GM10248 (cell line): ENCODE measurements at regions of chr1 and their contacts with region 1.

Region 1: GRCh38 chr1:152189657-152190442 is 30.8 kb upstream of the RPTN start:
- DNase-seq: peak; percentile 65
- CTCF ChIP-seq: peak; percentile 71

Region 2: GRCh38 chr1:151961833-151962232 is 228.0 kb before region 1 on chr1:
- CTCF ChIA-PET with region 1: no interaction called
- POLR2A ChIA-PET with region 1: no interaction called
- DNase-seq: no peak
- CTCF ChIP-seq: no peak

Region 3: GRCh38 chr1:152047730-152048402 is 142.0 kb before region 1 on chr1:
- CTCF ChIA-PET with region 1: interaction called, 220 read pairs
- POLR2A ChIA-PET with region 1: no interaction called
- DNase-seq: peak; percentile 87
- CTCF ChIP-seq: peak; percentile 65

Region 4: DNA sequence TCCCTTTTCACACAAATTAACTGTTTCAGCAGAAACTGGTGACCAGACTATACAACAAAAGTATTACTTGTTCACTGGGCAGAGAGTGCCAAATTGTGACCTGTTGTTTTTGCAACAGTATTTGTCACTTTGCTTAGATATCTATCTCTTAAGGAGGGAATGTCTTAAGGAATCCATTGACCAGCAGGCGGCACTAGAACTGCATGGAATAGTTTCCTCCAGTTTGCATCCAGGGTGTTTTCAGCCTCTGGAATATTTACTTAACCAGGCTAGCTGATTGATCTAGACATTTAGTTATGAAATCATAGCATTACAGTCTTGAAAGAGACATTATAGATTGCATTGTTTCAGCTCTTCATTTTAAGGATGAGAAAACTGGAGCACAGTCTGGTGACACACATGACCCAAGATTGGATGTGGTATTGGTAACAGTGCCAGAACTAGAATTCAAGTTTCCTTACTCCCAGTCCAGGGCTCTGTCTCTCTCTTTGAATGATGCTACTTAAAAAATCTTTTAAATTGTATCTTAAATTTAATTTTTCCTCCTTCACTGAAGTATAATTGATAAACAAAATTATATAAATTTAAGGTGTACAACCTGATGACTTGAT is 47.8 kb before region 1 on chr1:
- CTCF ChIA-PET with region 1: interaction called, 21 read pairs
- POLR2A ChIA-PET with region 1: no interaction called
- DNase-seq: peak; percentile 13
- CTCF ChIP-seq: peak; percentile 42

Region 5: GRCh38 chr1:152162806-152163463 is 26.9 kb before region 1 on chr1:
- CTCF ChIA-PET with region 1: interaction called, 11 read pairs
- POLR2A ChIA-PET with region 1: no interaction called
- DNase-seq: no peak
- CTCF ChIP-seq: no peak

Region 6: DNA sequence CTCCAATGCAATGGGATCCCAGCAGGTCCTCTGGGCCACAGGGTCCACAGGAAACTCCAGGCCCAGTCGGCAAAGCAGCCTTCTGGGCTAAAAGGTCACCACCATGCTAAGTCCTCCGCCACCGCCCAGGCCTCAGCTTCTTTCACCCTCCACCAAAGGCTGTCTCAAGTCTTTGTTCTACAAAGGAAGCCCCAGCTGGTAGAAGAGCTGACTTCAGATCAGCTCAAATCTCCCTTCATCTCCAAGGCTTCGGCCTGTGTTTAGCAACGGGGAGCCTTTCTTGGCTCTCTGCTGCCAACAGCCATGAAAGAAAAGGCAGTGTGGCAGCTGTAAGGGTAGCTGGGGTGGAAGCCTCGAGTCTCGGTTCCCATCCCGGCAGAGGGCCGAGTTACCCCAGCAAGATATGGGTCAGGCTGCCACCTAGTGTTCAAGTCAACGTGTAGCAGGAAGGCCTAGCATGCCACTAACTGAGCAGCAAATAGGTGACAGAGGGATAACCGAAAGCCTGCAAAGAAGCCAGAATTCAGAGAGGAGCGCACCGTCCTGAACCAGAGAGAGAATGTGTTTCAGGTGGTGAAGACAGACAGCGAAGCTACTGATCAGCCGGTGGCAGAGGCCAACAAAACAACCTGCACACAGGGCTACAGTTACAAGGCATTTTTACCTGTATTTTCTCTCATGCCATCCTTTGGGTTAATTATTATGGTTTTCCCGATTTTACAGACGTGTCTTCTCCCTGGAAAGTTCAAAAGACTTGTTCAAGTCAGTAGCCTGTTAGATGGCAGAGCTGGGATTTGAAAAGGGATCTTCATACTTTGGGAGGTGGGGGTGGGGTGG is 251.0 kb after region 1 on chr1:
- CTCF ChIA-PET with region 1: interaction called, 21 read pairs
- POLR2A ChIA-PET with region 1: no interaction called
- DNase-seq: peak; percentile 85
- CTCF ChIP-seq: peak; percentile 85